Pancreas (tissue), 10 donors: ENCODE measurements at regions of chr9 and their contacts with region 1.

Region 1: DNA sequence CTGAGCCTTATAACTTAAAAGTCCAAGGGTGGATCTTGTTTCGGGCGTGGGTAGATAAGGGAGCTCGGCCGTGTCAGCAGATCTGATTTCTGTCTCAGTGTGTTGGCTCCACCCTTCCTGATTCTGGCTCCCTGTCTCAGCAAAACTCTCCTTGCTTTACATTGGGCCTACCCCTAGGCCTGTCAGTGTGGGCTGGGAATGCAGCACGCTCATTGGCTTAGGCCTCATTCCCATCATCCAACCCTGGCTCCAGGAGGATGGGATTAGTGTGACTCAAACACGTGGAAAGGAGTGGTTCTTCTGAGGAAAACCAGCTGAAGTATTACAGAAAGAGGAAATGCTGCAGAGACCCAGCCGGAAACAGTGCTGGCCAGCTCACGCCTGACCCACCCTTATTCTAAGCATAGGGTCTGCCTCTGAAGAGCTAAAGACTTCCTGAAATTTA is 59.9 kb downstream of the ZFAND5 start:
- DNase-seq: peak in 3 of 6 donors; percentile 21 to 67 (median 38)
- ATAC-seq: peak in 3 of 4 donors; percentile 95 to 96 (median 96)
- H3K4me3 ChIP-seq: peak overlapping the region in 1 of 4 donors; percentile 4
- H3K27ac ChIP-seq: peak overlapping the region in 2 of 4 donors; percentile 47 to 49
- H3K4me1 ChIP-seq: peaks cover 0 to 8% (median 0%) of the 10 kb centered on the region in 3 donors
- H3K27me3 ChIP-seq: no peaks in the 10 kb centered on the region
- CTCF ChIP-seq: no peak

Region 2: DNA sequence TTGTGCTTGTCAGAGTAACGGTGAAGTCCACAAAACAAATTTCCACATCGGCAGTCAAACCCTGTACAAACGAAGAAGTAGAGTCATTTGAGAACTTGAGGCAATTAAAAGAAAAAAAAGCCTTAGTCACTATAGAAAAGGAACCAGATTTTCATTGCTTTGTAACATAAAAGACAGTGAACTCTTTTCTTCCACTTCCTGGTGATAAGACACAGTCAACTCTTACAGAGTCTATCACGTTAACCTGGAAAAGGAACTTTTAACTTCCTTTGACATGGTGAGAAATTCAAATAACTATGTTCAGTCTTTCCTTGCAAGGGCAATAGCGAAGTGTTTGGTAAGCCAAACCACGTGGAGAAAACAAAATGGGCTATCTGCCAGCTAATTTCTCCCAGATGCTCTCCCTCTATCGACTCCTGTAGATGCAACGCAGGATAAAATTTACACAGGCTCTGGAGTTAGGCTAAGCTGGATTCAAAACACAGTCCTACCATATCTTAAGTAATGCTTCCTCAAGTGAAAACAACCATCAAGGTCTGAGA is 51.0 kb after region 1 on chr9:
- intact Hi-C with region 1: loop called in 1 of 3 experiments (anchors 10 kb)
- DNase-seq: no peak
- ATAC-seq: peak in 3 of 4 donors; percentile 10 to 26 (median 13)
- H3K4me3 ChIP-seq: no peak overlapping the region
- H3K27ac ChIP-seq: peak overlapping the region in 1 of 4 donors; percentile 23
- H3K4me1 ChIP-seq: peaks cover 34 to 67% (median 54%) of the 10 kb centered on the region in 3 donors
- H3K27me3 ChIP-seq: no peaks in the 10 kb centered on the region
- CTCF ChIP-seq: no peak